MCF 10A (cell line): ENCODE measurements at regions of chr12 and their contacts with region 1.

Region 1: DNA sequence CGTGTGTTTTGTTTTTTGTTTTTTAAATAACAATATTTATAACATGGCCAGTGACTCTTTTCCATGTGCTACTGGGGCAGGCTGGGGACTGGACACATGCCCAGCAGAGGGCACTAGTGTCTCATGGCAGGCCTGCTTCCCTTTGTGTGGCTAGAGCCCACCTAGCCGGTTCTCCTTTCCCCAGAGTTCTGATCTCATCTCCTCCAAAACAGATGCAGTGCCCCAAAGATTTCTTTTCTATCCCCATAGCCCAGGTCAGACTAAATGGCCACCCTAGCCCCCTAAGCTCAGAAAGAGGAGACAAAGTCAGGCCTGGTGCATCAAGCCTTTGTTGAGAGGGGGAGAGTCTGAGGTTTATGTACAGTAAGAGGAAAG is 21.2 kb downstream of the PRPF40B start:
- DNase-seq: peak; percentile 71
- H3K4me3 Mint-ChIP-seq: no peak overlapping the region
- H3K27ac Mint-ChIP-seq: no peak overlapping the region
- H3K4me1 Mint-ChIP-seq: peaks cover 13% of the 10 kb centered on the region
- H3K27me3 Mint-ChIP-seq: no peaks in the 10 kb centered on the region
- CTCF ChIP-seq: peak; percentile 82

Region 2: GRCh38 chr12:49655595-49656236 is 11.1 kb after region 1 on chr12:
- CTCF ChIA-PET with region 1: interaction called, 22 read pairs
- POLR2A ChIA-PET with region 1: interaction called, 3 read pairs
- intact Hi-C with region 1: no loop called
- DNase-seq: no peak
- H3K4me3 Mint-ChIP-seq: no peak overlapping the region
- H3K27ac Mint-ChIP-seq: no peak overlapping the region
- H3K4me1 Mint-ChIP-seq: no peaks in the 10 kb centered on the region
- H3K27me3 Mint-ChIP-seq: peaks cover 13% of the 10 kb centered on the region
- CTCF ChIP-seq: no peak

Region 3: GRCh38 chr12:49683599-49684309 is 39.1 kb after region 1 on chr12:
- CTCF ChIA-PET with region 1: no interaction called
- POLR2A ChIA-PET with region 1: no interaction called
- intact Hi-C with region 1: no loop called
- DNase-seq: no peak
- H3K4me3 Mint-ChIP-seq: no peak overlapping the region
- H3K27ac Mint-ChIP-seq: no peak overlapping the region
- H3K4me1 Mint-ChIP-seq: no peaks in the 10 kb centered on the region
- H3K27me3 Mint-ChIP-seq: no peaks in the 10 kb centered on the region
- CTCF ChIP-seq: no peak

Region 4: DNA sequence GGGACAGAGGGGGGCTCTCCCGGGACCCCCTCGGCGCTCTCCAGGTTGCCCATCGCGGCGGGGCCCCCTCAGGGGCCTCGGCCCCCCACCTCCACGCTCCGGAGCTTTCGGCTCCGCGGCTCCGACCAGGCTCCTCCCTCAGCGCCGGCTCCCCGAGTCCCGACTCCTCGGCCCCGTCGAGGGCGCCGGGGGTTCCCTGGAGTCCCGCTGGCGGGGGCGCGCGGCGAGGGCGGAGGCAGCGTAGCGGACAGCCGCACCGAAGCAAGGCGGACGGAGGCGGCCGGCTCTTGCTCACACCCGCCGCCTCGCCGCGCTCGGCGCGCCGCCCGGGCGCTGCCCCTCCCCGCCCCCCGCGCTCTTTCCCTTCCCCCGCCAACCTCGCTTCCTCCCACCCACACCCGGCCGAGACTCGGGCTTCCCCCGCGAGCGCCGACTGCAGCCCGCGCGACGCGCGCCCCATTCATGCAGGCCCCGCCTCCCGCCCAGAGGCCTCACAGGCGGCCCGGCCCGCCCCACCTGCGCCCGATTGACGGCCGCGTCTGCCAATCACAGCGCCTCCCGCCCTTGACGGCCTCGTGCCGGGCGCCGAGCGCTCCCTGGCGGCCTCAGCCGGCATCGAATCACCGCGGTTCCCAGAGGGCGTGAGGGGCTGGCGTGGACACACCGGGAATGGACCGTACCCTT is 62.7 kb after region 1 on chr12 and contains the start of gene FMNL3:
- CTCF ChIA-PET with region 1: interaction called, 7 read pairs
- POLR2A ChIA-PET with region 1: interaction called, 5 read pairs
- intact Hi-C with region 1: loop called (anchors 1 kb)
- DNase-seq: peak; percentile 89
- H3K4me3 Mint-ChIP-seq: peak within 1 kb of the TSS; percentile 50
- H3K27ac Mint-ChIP-seq: no peak within 1 kb of the TSS
- H3K4me1 Mint-ChIP-seq: peaks cover 5% of the 10 kb centered on the region
- H3K27me3 Mint-ChIP-seq: peaks cover 66% of the 10 kb centered on the region
- CTCF ChIP-seq: peak; percentile 91
- total RNA-seq, gene FMNL3: 0.58 and 0.91 TPM in 2 replicates

Region 5: DNA sequence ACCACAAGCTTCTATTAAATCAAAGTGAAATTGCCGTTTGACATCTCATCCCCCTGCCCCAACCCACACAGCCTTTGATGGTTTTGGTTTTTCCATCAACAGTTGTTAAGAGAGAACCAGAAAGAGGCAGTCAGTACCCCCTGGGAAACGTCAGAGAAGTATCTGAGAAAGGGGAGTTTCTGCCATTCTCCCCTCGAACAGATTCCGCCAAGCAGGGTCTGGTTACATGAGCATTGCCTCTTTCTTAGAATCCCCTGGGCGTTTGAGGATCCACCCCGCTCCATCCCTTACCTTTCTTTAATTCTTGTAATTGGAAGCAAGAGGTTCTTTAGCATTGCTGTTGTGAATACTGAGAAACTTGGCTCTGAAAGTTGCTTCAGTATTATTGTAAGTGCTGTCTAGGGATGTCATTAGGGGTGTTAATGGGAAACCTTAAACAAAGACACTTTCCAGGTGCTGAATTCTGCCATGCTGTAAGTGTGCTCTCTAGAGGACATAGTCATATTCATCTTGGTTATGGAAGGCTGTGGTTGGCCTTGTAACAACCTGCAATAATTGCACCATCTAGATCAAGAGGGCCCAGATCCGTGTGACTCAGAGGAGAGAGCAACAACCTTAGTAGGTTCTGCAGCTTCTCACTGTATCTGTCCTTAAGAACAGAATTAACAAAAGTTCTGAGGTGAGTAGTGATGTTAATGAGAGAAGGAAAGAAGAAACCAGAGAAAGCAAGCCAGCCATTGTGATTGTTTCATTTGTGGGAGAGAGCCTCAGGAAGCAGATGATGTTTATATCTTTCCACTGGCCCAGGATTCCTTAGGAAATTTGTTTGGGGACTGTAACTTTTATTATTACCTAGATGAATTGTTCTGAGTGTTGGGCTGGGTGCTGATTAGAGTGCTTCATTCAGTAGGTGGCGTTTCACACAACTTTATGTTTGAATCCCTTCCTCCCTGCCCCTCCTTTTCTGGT is 105.7 kb after region 1 on chr12:
- CTCF ChIA-PET with region 1: interaction called, 8 read pairs
- POLR2A ChIA-PET with region 1: no interaction called
- intact Hi-C with region 1: loop called (anchors 5 kb)
- DNase-seq: peak; percentile 92
- H3K4me3 Mint-ChIP-seq: peak overlapping the region; percentile 42
- H3K27ac Mint-ChIP-seq: peak overlapping the region; percentile 81
- H3K4me1 Mint-ChIP-seq: peaks cover 19% of the 10 kb centered on the region
- H3K27me3 Mint-ChIP-seq: no peaks in the 10 kb centered on the region
- CTCF ChIP-seq: no peak

Region 6: GRCh38 chr12:49825360-49825754 is 180.8 kb after region 1 on chr12:
- CTCF ChIA-PET with region 1: no interaction called
- POLR2A ChIA-PET with region 1: no interaction called
- intact Hi-C with region 1: no loop called
- DNase-seq: no peak
- H3K4me3 Mint-ChIP-seq: no peak overlapping the region
- H3K27ac Mint-ChIP-seq: no peak overlapping the region
- H3K4me1 Mint-ChIP-seq: peaks cover 21% of the 10 kb centered on the region
- H3K27me3 Mint-ChIP-seq: no peaks in the 10 kb centered on the region
- CTCF ChIP-seq: no peak